Endothelial cell of umbilical vein (primary cell): ENCODE measurements at regions of chrX and their contacts with region 1.

Region 1: DNA sequence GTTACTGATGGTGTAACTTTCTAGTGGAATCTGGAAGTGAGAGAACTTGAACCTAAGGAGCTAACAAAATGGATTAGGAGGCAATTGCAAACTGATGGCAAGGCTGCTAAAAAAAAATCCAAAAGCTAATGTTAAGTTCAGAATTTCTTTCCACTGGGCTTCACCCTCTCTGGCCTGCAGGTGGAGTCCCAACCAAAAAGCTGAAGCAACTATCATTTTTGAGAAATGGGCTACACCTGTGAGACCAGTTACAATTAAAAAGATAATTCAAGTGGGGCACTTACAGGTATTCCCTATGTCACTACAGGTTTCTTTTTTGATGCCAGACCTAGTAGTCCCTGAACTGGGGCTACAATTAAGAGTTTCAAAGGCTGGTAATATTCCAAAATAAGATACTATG is 142.1 kb upstream of the FTHL17 start:
- DNase-seq: peak; percentile 19
- H3K4me3 ChIP-seq: no peak overlapping the region
- H3K27ac ChIP-seq: no peak overlapping the region
- H3K4me1 ChIP-seq: peaks cover 20% of the 10 kb centered on the region
- H3K27me3 ChIP-seq: no peaks in the 10 kb centered on the region
- CTCF ChIP-seq: peak; percentile 19 to 40
- POLR2A ChIP-seq: no peak

Region 2: DNA sequence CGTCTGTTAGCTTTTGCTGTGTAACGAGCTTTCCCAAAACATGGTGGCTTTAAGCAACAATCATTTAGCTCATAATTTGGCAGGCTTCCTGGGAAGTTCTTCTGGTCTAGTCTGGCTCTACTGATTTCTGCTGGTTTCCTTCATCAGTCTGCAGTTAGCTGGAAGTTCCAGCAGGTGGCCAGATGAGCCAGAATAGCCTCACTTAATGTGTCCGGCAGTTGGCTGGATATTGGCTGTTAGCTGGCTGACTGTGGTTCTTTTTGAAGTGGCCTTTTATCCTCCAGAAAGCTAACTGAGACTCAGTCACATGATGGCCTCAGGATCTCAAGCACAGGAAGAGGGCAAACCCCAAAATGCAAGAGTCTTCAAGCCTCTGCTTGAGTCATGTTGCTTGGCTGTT is 177.0 kb before region 1 on chrX:
- CTCF ChIA-PET with region 1: interaction called, 13 read pairs
- POLR2A ChIA-PET with region 1: no interaction called
- dilution Hi-C with region 1: no loop called
- intact Hi-C with region 1: loop called (anchors 2 kb)
- DNase-seq: peak; percentile 31
- H3K4me3 ChIP-seq: no peak overlapping the region
- H3K27ac ChIP-seq: no peak overlapping the region
- H3K4me1 ChIP-seq: peaks cover 2% of the 10 kb centered on the region
- H3K27me3 ChIP-seq: no peaks in the 10 kb centered on the region
- CTCF ChIP-seq: peak; percentile 44 to 58
- POLR2A ChIP-seq: no peak

Region 3: GRCh38 chrX:31266172-31267076 is 52.5 kb after region 1 on chrX:
- CTCF ChIA-PET with region 1: interaction called, 16 read pairs
- POLR2A ChIA-PET with region 1: no interaction called
- dilution Hi-C with region 1: no loop called
- intact Hi-C with region 1: loop called (anchors 5 kb)
- DNase-seq: peak; percentile 53
- H3K4me3 ChIP-seq: peak overlapping the region; percentile 57 to 81 (median 74)
- H3K27ac ChIP-seq: peak overlapping the region; percentile 37
- H3K4me1 ChIP-seq: no peaks in the 10 kb centered on the region
- H3K27me3 ChIP-seq: no peaks in the 10 kb centered on the region
- CTCF ChIP-seq: no peak
- POLR2A ChIP-seq: no peak

Region 4: DNA sequence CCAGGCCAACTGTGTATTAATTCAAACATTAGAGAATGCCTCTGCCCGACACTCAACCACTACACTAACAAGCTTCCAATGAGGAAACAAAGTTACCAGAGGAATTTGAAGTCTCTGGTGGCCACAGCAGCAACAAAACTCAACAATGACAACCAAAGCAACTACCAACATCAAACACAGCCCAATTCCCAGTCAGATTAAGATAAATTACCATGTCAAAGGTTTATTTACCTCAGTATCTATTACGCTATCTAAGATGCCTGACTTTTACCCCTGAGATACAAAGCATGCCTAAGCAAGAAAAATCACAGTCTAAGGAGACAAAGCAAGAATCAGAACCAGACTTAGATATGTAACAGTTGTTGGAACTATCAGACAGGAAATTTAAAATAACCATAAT is 88.0 kb after region 1 on chrX:
- CTCF ChIA-PET with region 1: no interaction called
- POLR2A ChIA-PET with region 1: no interaction called
- dilution Hi-C with region 1: no loop called
- intact Hi-C with region 1: no loop called
- DNase-seq: no peak
- H3K4me3 ChIP-seq: no peak overlapping the region
- H3K27ac ChIP-seq: no peak overlapping the region
- H3K4me1 ChIP-seq: no peaks in the 10 kb centered on the region
- H3K27me3 ChIP-seq: no peaks in the 10 kb centered on the region
- CTCF ChIP-seq: no peak
- POLR2A ChIP-seq: no peak

Region 5: DNA sequence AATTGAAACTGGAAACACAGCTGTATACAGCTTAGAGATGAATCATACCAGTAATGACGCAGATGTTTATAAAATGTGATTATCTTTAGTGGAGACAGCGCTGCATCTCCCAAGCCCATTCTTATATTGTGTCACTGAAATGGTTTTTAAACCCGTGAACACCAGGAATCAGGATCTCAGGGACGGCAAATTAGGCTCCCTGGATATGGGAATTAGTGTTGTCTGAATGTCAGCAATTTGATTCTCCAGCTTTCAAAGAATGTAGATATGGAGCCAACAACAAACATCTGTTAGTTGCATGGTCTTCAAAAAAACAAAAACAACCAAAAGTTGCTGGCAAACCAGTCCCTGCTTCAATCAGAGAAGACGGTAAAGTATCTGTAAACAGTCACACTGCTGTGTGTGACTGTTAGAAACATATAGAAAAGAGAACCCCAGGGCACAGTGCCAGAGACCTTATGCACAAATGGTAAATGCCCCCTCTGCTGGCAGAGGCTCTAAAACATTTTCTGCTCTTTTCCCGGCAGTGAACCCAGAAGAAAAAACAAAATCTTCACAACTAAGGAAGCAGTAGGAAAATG is 209.8 kb after region 1 on chrX:
- CTCF ChIA-PET with region 1: interaction called, 21 read pairs
- POLR2A ChIA-PET with region 1: no interaction called
- dilution Hi-C with region 1: no loop called
- intact Hi-C with region 1: loop called (anchors 1 kb)
- DNase-seq: peak; percentile 44
- H3K4me3 ChIP-seq: no peak overlapping the region
- H3K27ac ChIP-seq: no peak overlapping the region
- H3K4me1 ChIP-seq: no peaks in the 10 kb centered on the region
- H3K27me3 ChIP-seq: no peaks in the 10 kb centered on the region
- CTCF ChIP-seq: peak; percentile 33 to 42
- POLR2A ChIP-seq: no peak

Region 6: GRCh38 chrX:31832263-31832662 is 618.3 kb after region 1 on chrX:
- CTCF ChIA-PET with region 1: no interaction called
- POLR2A ChIA-PET with region 1: no interaction called
- dilution Hi-C with region 1: no loop called
- intact Hi-C with region 1: loop called (anchors 10 kb)
- DNase-seq: peak; percentile 43
- H3K4me3 ChIP-seq: no peak overlapping the region
- H3K27ac ChIP-seq: no peak overlapping the region
- H3K4me1 ChIP-seq: peaks cover 6% of the 10 kb centered on the region
- H3K27me3 ChIP-seq: peaks cover 0 to 6% of the 10 kb centered on the region in 2 experiments
- CTCF ChIP-seq: no peak
- POLR2A ChIP-seq: no peak